Spleen (tissue), 13 donors: ENCODE measurements at regions of chr19 and their contacts with region 1.

Region 1: GRCh38 chr19:4149518-4150288 is 3.7 kb upstream of the CREB3L3 start:
- DNase-seq: no peak
- H3K4me3 ChIP-seq: no peak overlapping the region
- H3K27ac ChIP-seq: no peak overlapping the region
- H3K4me1 ChIP-seq: peaks cover 0 to 6% (median 0%) of the 10 kb centered on the region in 6 donors
- H3K27me3 ChIP-seq: peaks cover 0 to 58% (median 0%) of the 10 kb centered on the region in 7 donors
- CTCF ChIP-seq: no peak
- POLR2A ChIP-seq: no peak

Region 2: GRCh38 chr19:3923912-3924311 is 225.8 kb before region 1 on chr19:
- intact Hi-C with region 1: loop called (anchors 5 kb)
- DNase-seq: no peak
- H3K4me3 ChIP-seq: no peak overlapping the region
- H3K27ac ChIP-seq: no peak overlapping the region
- H3K4me1 ChIP-seq: no peaks in the 10 kb centered on the region
- H3K27me3 ChIP-seq: peaks cover 0 to 6% (median 0%) of the 10 kb centered on the region in 7 donors
- CTCF ChIP-seq: no peak
- POLR2A ChIP-seq: no peak